ENCODE measurements at regions of chr6 and their contacts with region 1.

Region 1: GRCh38 chr6:156776840-156777576 is at the start of gene ARID1B:
- DNase-seq: peak in 1 of 2 donors; percentile 91
- H3K4me3 ChIP-seq: peak within 1 kb of the TSS; percentile 76 to 99
- H3K27ac ChIP-seq: peak within 1 kb of the TSS; percentile 97 to 100
- H3K4me1 ChIP-seq: peaks cover 0 to 26% of the 10 kb centered on the region in 2 donors
- H3K27me3 ChIP-seq: no peaks in the 10 kb centered on the region
- CTCF ChIP-seq: no peak
- total RNA-seq, gene ARID1B: 97.9 TPM

Region 2: DNA sequence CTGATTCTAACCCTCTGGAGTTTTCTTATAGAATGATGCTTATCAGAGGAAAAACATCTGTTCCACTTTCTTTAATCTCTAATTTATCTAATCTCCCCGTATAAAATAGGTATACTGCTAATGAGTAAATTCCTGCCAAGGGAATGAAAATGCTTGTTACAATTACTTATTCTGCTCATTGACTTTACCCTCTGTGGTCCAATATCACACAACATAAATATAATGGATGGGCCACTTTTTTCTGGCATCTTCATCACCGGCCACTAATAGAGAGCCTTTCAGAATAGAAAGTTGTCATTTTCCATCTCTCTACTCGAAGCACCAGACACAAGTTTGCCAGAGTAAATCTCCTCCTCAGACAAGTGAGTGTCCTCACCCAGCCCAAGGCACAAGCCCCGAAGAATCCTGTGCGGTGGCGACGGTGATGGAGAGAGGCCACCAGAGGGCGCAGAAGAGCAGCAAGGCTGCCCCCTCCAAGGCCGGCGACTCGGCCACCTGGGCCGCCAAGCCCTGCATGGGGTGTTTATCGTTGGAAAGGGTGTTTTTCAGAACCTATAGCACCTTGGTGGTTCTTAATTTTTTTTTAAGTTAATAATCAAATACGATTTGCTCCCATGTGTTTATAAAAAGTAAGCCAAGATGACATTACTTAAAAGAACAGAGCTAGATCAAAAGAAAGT is 212.7 kb before region 1 on chr6:
- intact Hi-C with region 1: loop called (anchors 2 kb)
- DNase-seq: peak; percentile 30 to 83
- H3K4me3 ChIP-seq: no peak overlapping the region
- H3K27ac ChIP-seq: no peak overlapping the region
- H3K4me1 ChIP-seq: peaks cover 0 to 4% of the 10 kb centered on the region in 2 donors
- H3K27me3 ChIP-seq: no peaks in the 10 kb centered on the region
- CTCF ChIP-seq: peak; percentile 84 to 96 (median 94)

Region 3: GRCh38 chr6:156719720-156720563 is 57.1 kb before region 1 on chr6:
- intact Hi-C with region 1: loop called (anchors 1 kb)
- DNase-seq: peak; percentile 80 to 96
- H3K4me3 ChIP-seq: peak overlapping the region; percentile 34 to 56
- H3K27ac ChIP-seq: peak overlapping the region; percentile 91
- H3K4me1 ChIP-seq: peaks cover 4 to 11% of the 10 kb centered on the region in 2 donors
- H3K27me3 ChIP-seq: no peaks in the 10 kb centered on the region
- CTCF ChIP-seq: no peak

Region 4: GRCh38 chr6:156848533-156848932 is 71.5 kb after region 1 on chr6:
- intact Hi-C with region 1: loop called (anchors 5 kb)
- DNase-seq: peak in 1 of 2 donors; percentile 74
- H3K4me3 ChIP-seq: peak overlapping the region in 1 of 2 donors; percentile 48
- H3K27ac ChIP-seq: peak overlapping the region; percentile 68 to 69
- H3K4me1 ChIP-seq: peaks cover 7 to 82% of the 10 kb centered on the region in 2 donors
- H3K27me3 ChIP-seq: no peaks in the 10 kb centered on the region
- CTCF ChIP-seq: no peak

Region 5: GRCh38 chr6:157021344-157021992 is 244.5 kb after region 1 on chr6:
- intact Hi-C with region 1: loop called (anchors 1 kb)
- DNase-seq: peak; percentile 76 to 95
- H3K4me3 ChIP-seq: peak overlapping the region; percentile 85 to 93
- H3K27ac ChIP-seq: peak overlapping the region; percentile 99
- H3K4me1 ChIP-seq: peaks cover 0 to 16% of the 10 kb centered on the region in 2 donors
- H3K27me3 ChIP-seq: no peaks in the 10 kb centered on the region
- CTCF ChIP-seq: peak; percentile 9 to 43 (median 22)

Region 6: GRCh38 chr6:157184202-157185020 is 407.4 kb after region 1 on chr6:
- intact Hi-C with region 1: loop called (anchors 10 kb)
- DNase-seq: peak in 1 of 2 donors; percentile 89
- H3K4me3 ChIP-seq: peak overlapping the region; percentile 7 to 30
- H3K27ac ChIP-seq: peak overlapping the region in 1 of 2 donors; percentile 35
- H3K4me1 ChIP-seq: peaks cover 0 to 20% of the 10 kb centered on the region in 2 donors
- H3K27me3 ChIP-seq: no peaks in the 10 kb centered on the region
- CTCF ChIP-seq: peak; percentile 89 to 99 (median 96)

Region 7: DNA sequence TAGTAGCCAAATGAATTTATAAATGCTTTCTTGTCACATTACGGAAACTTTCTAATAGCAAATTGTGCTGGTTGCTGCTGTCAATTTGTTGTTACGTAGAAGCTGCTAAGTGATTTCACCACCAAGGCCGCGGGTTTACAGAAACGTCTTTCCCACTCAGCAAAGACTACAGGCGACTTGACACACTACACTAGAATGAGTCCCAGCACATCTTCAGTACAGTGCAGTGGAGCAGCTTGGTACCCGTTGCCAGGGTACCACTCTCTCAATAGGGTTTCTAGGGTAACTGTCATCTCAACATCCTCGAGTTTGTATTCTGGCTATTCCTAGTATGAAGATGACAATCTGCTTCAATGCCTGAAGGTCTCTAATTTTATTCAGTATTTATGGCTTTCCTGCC is 581.3 kb after region 1 on chr6:
- intact Hi-C with region 1: no loop called
- DNase-seq: no peak
- H3K4me3 ChIP-seq: no peak overlapping the region
- H3K27ac ChIP-seq: no peak overlapping the region
- H3K4me1 ChIP-seq: peaks cover 0 to 14% of the 10 kb centered on the region in 2 donors
- H3K27me3 ChIP-seq: no peaks in the 10 kb centered on the region
- CTCF ChIP-seq: no peak

Measured in ascending aorta (tissue), 2 donors.